Heart left ventricle (tissue), 16 donors: ENCODE measurements at regions of chr1 and their contacts with region 1.

Region 1: GRCh38 chr1:219732814-219733491 is 120.0 kb upstream of the ZC3H11B start:
- DNase-seq: no peak
- ATAC-seq: no peak
- H3K4me3 ChIP-seq: no peak overlapping the region
- H3K27ac ChIP-seq: no peak overlapping the region
- H3K4me1 ChIP-seq: peaks cover 0 to 13% (median 0%) of the 10 kb centered on the region in 12 donors
- H3K27me3 ChIP-seq: no peaks in the 10 kb centered on the region
- CTCF ChIP-seq: no peak
- POLR2A ChIP-seq: no peak

Region 2: GRCh38 chr1:219682788-219683187 is 50.2 kb before region 1 on chr1:
- intact Hi-C with region 1: loop called in 2 of 10 experiments (anchors 5 to 10 kb)
- DNase-seq: no peak
- ATAC-seq: peak in 1 of 4 donors; percentile 44
- H3K4me3 ChIP-seq: no peak overlapping the region
- H3K27ac ChIP-seq: no peak overlapping the region
- H3K4me1 ChIP-seq: no peaks in the 10 kb centered on the region
- H3K27me3 ChIP-seq: no peaks in the 10 kb centered on the region
- CTCF ChIP-seq: no peak
- POLR2A ChIP-seq: no peak

Region 3: GRCh38 chr1:219900201-219900600 is 167.2 kb after region 1 on chr1:
- intact Hi-C with region 1: no loop called
- DNase-seq: no peak
- ATAC-seq: peak in 1 of 4 donors; percentile 45
- H3K4me3 ChIP-seq: no peak overlapping the region
- H3K27ac ChIP-seq: peak overlapping the region in 3 of 12 donors; percentile 10 to 60 (median 40)
- H3K4me1 ChIP-seq: peaks cover 0 to 5% (median 0%) of the 10 kb centered on the region in 12 donors
- H3K27me3 ChIP-seq: no peaks in the 10 kb centered on the region
- CTCF ChIP-seq: no peak
- POLR2A ChIP-seq: no peak